ENCODE measurements at regions of chr15 and their contacts with region 1.

Region 1: DNA sequence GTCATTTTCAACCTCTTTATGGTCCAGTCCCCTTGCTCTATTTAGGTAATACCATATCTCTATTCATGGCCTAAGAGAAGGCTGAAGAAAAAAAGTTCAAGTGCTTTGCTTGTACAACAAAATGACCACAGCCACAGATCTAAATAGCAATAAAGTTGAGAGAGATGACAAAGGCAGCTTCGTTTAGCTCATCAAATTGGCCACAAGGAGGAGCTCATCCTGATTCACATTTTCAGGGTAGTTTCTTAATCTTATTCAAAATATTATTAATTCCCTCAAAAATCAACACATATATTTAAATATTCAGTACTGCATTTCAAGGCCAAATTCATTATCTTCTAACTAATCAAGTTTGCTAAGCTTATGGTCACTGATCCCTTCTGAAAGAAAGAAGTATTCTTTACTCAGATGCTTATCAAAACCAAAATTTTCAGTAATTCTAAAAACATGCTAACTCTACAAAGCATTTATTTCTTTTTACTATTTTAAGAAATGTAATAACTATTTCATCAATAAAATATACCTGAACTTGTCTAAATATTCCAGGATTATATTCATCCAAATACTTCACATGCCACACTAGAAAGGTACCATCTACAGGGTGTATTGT is 85.5 kb downstream of the DMXL2 start:
- DNase-seq: peak; percentile 31
- H3K4me3 ChIP-seq: no peak overlapping the region
- H3K27ac ChIP-seq: no peak overlapping the region
- H3K4me1 ChIP-seq: no peaks in the 10 kb centered on the region
- H3K27me3 ChIP-seq: no peaks in the 10 kb centered on the region
- CTCF ChIP-seq: peak; percentile 40 to 59
- POLR2A ChIP-seq: no peak

Region 2: GRCh38 chr15:51425517-51426367 is 111.3 kb before region 1 on chr15:
- CTCF ChIA-PET with region 1: no interaction called
- POLR2A ChIA-PET with region 1: no interaction called
- dilution Hi-C with region 1: no loop called
- intact Hi-C with region 1: no loop called
- DNase-seq: peak; percentile 5
- H3K4me3 ChIP-seq: no peak overlapping the region
- H3K27ac ChIP-seq: no peak overlapping the region
- H3K4me1 ChIP-seq: no peaks in the 10 kb centered on the region
- H3K27me3 ChIP-seq: peaks cover 0 to 2% of the 10 kb centered on the region in 2 experiments
- CTCF ChIP-seq: no peak
- POLR2A ChIP-seq: no peak

Region 3: DNA sequence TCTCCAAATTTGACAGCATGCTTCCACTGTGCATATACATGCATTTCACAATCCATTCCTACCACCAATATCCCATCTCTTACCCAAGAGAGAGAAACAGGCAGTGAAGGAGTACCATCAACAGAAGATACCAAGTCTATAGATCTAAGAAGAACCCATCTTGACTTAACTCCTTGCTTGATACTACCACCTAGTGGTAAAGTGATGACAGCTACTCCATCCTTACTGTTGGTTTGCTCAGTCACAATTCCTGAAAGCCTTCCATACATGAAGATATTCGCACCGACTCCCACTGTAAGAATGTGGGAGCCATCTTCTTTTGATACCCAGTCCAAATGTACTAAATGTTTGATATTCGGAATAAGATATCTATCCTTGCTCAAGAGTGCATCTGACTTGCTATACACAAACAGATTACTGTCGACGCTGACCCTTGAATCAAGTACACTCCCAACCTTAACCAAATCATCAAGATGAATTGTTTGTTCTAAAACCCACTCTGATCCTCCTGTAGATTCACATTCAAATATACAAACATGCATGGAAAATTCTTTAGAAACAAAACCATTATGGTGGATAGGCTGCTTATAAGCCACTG is 37.6 kb before region 1 on chr15:
- CTCF ChIA-PET with region 1: interaction called, 14 read pairs
- POLR2A ChIA-PET with region 1: no interaction called
- dilution Hi-C with region 1: no loop called
- intact Hi-C with region 1: no loop called
- DNase-seq: peak; percentile 59
- H3K4me3 ChIP-seq: no peak overlapping the region
- H3K27ac ChIP-seq: no peak overlapping the region
- H3K4me1 ChIP-seq: peaks cover 19% of the 10 kb centered on the region
- H3K27me3 ChIP-seq: no peaks in the 10 kb centered on the region
- CTCF ChIP-seq: peak; percentile 61 to 66
- POLR2A ChIP-seq: no peak

Region 4: DNA sequence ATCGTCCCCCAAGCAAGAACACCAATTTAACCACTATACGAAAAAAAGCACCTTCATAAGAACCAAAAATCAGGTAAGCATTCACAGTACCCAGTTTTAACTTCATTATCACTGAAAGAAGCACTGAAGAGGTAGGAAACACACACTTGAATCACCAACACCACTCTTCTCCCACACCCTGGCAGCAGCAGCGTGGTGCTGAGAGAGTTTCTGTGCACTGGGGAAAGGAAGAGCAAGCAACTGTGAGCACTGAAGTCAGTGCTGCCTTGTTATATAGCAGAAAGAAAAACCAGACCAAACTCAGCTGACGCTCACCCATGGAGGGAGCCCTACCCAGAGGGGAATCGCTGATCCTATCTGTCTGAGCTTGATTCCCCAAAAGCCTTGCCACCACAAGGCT is 12.7 kb before region 1 on chr15:
- CTCF ChIA-PET with region 1: interaction called, 19 read pairs
- POLR2A ChIA-PET with region 1: no interaction called
- dilution Hi-C with region 1: no loop called
- intact Hi-C with region 1: no loop called
- DNase-seq: no peak
- H3K4me3 ChIP-seq: no peak overlapping the region
- H3K27ac ChIP-seq: no peak overlapping the region
- H3K4me1 ChIP-seq: no peaks in the 10 kb centered on the region
- H3K27me3 ChIP-seq: no peaks in the 10 kb centered on the region
- CTCF ChIP-seq: no peak
- POLR2A ChIP-seq: no peak

Region 5: GRCh38 chr15:51550841-51551240 is 13.8 kb after region 1 on chr15:
- CTCF ChIA-PET with region 1: interaction called, 29 read pairs
- POLR2A ChIA-PET with region 1: no interaction called
- dilution Hi-C with region 1: no loop called
- intact Hi-C with region 1: no loop called
- DNase-seq: no peak
- H3K4me3 ChIP-seq: no peak overlapping the region
- H3K27ac ChIP-seq: no peak overlapping the region
- H3K4me1 ChIP-seq: no peaks in the 10 kb centered on the region
- H3K27me3 ChIP-seq: no peaks in the 10 kb centered on the region
- CTCF ChIP-seq: no peak
- POLR2A ChIP-seq: no peak

Region 6: GRCh38 chr15:51622604-51623370 is 85.7 kb after region 1 on chr15 and contains the start of gene DMXL2:
- CTCF ChIA-PET with region 1: interaction called, 40 read pairs
- POLR2A ChIA-PET with region 1: no interaction called
- dilution Hi-C with region 1: no loop called
- intact Hi-C with region 1: loop called (anchors 2 kb)
- DNase-seq: peak; percentile 85
- H3K4me3 ChIP-seq: peak within 1 kb of the TSS; percentile 39 to 81 (median 66)
- H3K27ac ChIP-seq: no peak within 1 kb of the TSS
- H3K4me1 ChIP-seq: peaks cover 6% of the 10 kb centered on the region
- H3K27me3 ChIP-seq: peaks cover 2 to 3% of the 10 kb centered on the region in 2 experiments
- CTCF ChIP-seq: no peak
- POLR2A ChIP-seq: no peak
- total RNA-seq, gene DMXL2: 9.7 and 10.8 TPM in 2 replicates

Measured in endothelial cell of umbilical vein (primary cell).